Panc1 (cell line): ENCODE measurements at regions of chr7 and their contacts with region 1.

Region 1: DNA sequence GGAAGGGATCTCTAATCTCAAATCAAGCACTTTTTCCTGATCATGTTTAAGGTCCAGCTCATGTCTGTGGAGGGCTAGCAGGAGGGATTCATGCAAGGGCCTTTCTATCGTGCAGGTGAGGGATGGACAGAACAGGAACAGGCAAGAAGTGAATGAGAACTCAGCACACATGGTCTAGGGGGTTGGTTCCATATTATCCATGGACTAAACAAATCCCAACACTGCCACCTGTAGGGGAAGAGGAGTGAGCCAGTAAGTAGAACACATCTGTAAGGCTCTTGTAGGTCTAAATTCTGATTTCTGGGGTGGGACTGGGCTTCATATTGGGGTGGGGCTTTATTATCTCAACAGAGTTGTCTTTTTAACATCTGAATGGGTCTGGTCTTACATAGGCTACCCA is 138.0 kb upstream of the TARP start:
- DNase-seq: no peak
- ATAC-seq: no peak
- H3K4me3 ChIP-seq: no peak overlapping the region
- H3K27ac ChIP-seq: no peak overlapping the region
- H3K4me1 ChIP-seq: no peaks in the 10 kb centered on the region
- H3K27me3 ChIP-seq: 0 out of 2 replicates have a peak, but pooled peaks cover 4% of the 10 kb centered on the region
- CTCF ChIP-seq: peak; percentile 46

Region 2: GRCh38 chr7:38908759-38909335 is 497.4 kb after region 1 on chr7 and contains the start of gene VPS41:
- CTCF ChIA-PET with region 1: no interaction called
- POLR2A ChIA-PET with region 1: interaction called, 11 read pairs
- in situ Hi-C with region 1: no loop called
- intact Hi-C with region 1: no loop called
- DNase-seq: peak; percentile 51
- ATAC-seq: peak; percentile 100
- H3K4me3 ChIP-seq: peak within 1 kb of the TSS; percentile 80 to 96
- H3K27ac ChIP-seq: peak within 1 kb of the TSS; percentile 90
- H3K4me1 ChIP-seq: peaks cover 4% of the 10 kb centered on the region; the same call in 1 of the 2 replicates
- H3K27me3 ChIP-seq: no peaks in the 10 kb centered on the region; the same call in 1 of the 2 replicates
- CTCF ChIP-seq: no peak
- total RNA-seq, gene VPS41: 127 TPM